ENCODE measurements at regions of chr12 and their contacts with region 1.

Region 1: DNA sequence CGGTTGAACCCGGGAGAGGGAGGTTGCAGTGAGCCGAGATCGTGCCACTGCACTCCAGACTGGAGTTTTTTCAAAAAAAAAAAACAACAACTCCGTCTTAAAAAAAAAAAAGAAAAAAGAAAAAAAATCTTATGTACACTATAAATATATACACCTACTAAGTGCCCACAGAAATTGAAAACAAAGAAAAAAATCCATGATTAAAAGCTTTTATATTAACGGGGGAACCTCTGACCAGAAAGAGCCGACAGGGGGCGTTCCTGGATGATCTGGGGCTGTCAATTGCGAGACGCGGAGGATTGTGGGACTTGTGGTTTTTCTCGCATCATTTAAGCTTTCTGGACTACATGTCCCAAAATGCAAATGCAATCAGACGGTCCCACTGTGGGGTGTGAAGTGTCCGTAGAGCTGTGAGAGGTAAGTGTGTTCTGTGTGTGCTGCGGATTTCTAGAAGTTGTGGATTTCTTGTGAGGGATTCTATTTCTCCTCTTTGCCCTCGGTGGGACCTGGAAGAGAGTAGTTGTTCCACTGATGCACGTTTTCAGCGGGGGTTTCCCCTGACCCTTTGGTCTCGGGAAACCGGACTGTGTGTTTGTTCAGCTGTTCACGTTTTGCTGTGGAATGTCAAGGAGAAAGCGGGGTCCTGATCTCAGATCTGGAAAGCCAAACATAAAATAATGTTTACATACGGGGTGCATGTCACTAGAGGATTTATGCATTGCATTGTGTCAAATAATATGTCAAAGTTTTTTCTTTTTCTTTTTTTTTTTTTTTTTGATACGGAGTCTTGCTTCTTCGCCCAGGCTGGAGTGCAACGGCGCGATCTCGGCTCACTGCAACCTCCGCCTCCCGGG is at the start of gene SIRT4:
- DNase-seq: peak; percentile 90
- H3K4me3 ChIP-seq: peak within 1 kb of the TSS; percentile 57 to 77 (median 63)
- H3K27ac ChIP-seq: peak within 1 kb of the TSS; percentile 41
- H3K4me1 ChIP-seq: no peaks in the 10 kb centered on the region
- H3K27me3 ChIP-seq: no peaks in the 10 kb centered on the region
- CTCF ChIP-seq: peak; percentile 79 to 84
- total RNA-seq, gene SIRT4: 0.42 to 0.83 TPM

Region 2: GRCh38 chr12:119869720-119870119 is 432.5 kb before region 1 on chr12:
- CTCF ChIA-PET with region 1: no interaction called
- dilution Hi-C with region 1: no loop called
- in situ Hi-C with region 1: no loop called
- intact Hi-C with region 1: no loop called
- DNase-seq: peak; percentile 88
- H3K4me3 ChIP-seq: no peak overlapping the region
- H3K27ac ChIP-seq: peak overlapping the region; percentile 93
- H3K4me1 ChIP-seq: peaks cover 16% of the 10 kb centered on the region
- H3K27me3 ChIP-seq: no peaks in the 10 kb centered on the region
- CTCF ChIP-seq: peak in 1 of 2 donors; percentile 16

Region 3: GRCh38 chr12:120183211-120183631 is 119.0 kb before region 1 on chr12:
- CTCF ChIA-PET with region 1: no interaction called
- dilution Hi-C with region 1: no loop called
- in situ Hi-C with region 1: no loop called
- intact Hi-C with region 1: no loop called
- DNase-seq: no peak
- H3K4me3 ChIP-seq: no peak overlapping the region
- H3K27ac ChIP-seq: no peak overlapping the region
- H3K4me1 ChIP-seq: peaks cover 3% of the 10 kb centered on the region
- H3K27me3 ChIP-seq: no peaks in the 10 kb centered on the region
- CTCF ChIP-seq: no peak

Region 4: GRCh38 chr12:120249875-120250795 is 52.1 kb before region 1 on chr12:
- CTCF ChIA-PET with region 1: no interaction called
- dilution Hi-C with region 1: no loop called
- in situ Hi-C with region 1: no loop called
- intact Hi-C with region 1: no loop called
- DNase-seq: no peak
- H3K4me3 ChIP-seq: no peak overlapping the region
- H3K27ac ChIP-seq: peak overlapping the region; percentile 51
- H3K4me1 ChIP-seq: peaks cover 75% of the 10 kb centered on the region
- H3K27me3 ChIP-seq: no peaks in the 10 kb centered on the region
- CTCF ChIP-seq: no peak

Region 5: DNA sequence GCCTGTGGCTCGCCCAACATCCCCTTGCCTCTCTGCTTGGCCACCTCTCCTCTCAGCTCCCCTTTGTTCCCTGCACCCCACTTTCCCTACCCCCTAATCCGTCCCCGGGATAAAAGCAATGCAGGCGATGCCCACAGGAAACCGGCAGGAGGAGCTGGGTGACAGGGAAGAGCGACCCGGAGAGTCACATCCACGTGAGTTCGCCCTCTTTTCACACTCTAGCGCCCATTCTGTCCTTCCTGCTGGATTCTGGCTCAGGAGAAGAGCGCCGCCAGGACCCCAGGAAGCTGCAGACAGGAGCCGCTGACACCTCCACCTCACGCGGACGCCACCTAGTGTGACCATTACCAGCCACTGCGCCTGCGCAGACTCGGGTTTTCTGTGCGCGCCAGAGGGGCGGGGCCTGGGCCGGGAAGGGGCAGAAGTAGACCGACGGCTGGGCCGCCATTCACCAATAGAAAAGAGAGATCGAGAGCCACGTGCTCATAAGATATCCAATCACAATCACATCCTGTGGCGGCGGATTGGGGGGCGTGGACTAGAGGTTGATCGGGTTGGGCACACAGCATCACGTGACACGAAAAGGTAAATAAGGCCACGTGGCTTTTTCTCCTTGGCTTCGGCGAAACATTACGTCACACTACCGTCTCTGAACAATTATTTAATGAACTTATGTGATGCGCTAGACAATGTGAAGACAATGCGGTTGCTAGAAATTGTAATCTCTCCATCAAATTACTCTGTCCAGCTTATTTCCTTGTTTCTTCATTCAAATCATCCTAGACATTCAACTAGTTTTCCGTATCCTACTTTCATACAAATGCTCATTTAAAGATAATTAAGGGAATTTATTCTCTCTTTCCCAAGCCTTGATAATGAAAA is 15.3 kb after region 1 on chr12:
- CTCF ChIA-PET with region 1: interaction called, 12 read pairs
- dilution Hi-C with region 1: no loop called
- in situ Hi-C with region 1: no loop called
- intact Hi-C with region 1: loop called (anchors 1 kb)
- DNase-seq: peak; percentile 100
- H3K4me3 ChIP-seq: peak overlapping the region; percentile 65 to 69 (median 66)
- H3K27ac ChIP-seq: peak overlapping the region; percentile 55
- H3K4me1 ChIP-seq: peaks cover 4% of the 10 kb centered on the region
- H3K27me3 ChIP-seq: no peaks in the 10 kb centered on the region
- CTCF ChIP-seq: peak; percentile 39 to 61

Region 6: DNA sequence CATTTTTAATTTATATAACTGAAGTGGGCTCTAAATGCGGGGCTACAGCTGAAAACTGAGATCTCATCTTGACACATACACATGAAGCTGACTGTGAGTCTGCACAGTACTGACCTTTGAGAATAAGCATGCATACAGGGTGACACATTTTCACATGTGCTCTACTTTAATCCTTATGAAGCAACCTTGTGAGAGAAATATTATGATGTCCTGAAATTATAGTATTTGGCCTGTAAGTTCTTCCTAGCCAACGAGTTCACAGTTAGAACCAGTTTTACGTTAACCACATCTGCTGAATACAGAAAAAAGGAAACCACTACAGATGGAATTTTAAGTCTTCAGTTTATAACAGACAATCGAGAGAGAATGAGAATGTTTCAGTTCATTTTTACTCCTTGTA is 531.7 kb after region 1 on chr12:
- CTCF ChIA-PET with region 1: no interaction called
- dilution Hi-C with region 1: no loop called
- in situ Hi-C with region 1: no loop called
- intact Hi-C with region 1: no loop called
- DNase-seq: no peak
- H3K4me3 ChIP-seq: no peak overlapping the region
- H3K27ac ChIP-seq: no peak overlapping the region
- H3K4me1 ChIP-seq: no peaks in the 10 kb centered on the region
- H3K27me3 ChIP-seq: no peaks in the 10 kb centered on the region
- CTCF ChIP-seq: no peak